MCF 10A (cell line): ENCODE measurements at regions of chr1 and their contacts with region 1.

Region 1: DNA sequence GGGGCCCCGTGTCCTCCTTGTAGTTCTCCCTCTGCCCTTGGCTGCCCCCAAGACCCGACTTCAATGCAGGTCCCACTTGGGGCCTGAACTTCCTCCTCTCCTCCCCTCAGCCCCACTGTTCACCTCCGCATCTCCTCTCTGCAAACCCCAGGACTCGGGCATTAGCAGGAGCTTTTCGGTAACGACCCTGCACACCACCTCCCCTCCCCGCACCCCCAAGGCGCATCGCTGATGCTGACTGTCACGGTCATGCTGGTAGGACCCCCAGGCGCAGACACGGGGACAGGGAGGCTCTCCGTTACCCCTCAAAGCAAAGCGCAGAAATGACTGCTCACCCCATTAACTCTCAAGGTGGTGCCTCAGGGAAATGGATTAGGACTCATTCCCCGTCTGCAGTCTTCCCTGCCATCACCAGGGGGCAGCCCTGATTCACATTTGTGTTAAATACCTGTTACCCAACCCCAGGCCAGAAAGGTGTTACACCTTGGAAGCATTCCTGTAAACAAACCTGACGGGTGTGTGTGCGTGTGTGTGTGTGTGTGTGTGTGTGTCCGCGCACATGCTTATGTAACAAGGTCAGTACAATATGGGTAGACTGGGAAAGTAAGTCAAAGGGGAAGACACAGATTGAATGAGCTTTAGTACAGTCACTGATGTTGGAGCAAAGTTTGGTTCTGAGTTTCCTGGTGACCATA is 6.4 kb upstream of the GUCA2B start:
- DNase-seq: peak; percentile 86
- H3K4me3 Mint-ChIP-seq: no peak overlapping the region
- H3K27ac Mint-ChIP-seq: no peak overlapping the region
- H3K4me1 Mint-ChIP-seq: no peaks in the 10 kb centered on the region
- H3K27me3 Mint-ChIP-seq: peaks cover 26% of the 10 kb centered on the region
- CTCF ChIP-seq: peak; percentile 81

Region 2: GRCh38 chr1:41980827-41981653 is 165.7 kb before region 1 on chr1:
- CTCF ChIA-PET with region 1: no interaction called
- POLR2A ChIA-PET with region 1: no interaction called
- intact Hi-C with region 1: no loop called
- DNase-seq: no peak
- H3K4me3 Mint-ChIP-seq: no peak overlapping the region
- H3K27ac Mint-ChIP-seq: no peak overlapping the region
- H3K4me1 Mint-ChIP-seq: no peaks in the 10 kb centered on the region
- H3K27me3 Mint-ChIP-seq: no peaks in the 10 kb centered on the region
- CTCF ChIP-seq: no peak

Region 3: GRCh38 chr1:42127748-42128147 is 19.0 kb before region 1 on chr1:
- CTCF ChIA-PET with region 1: no interaction called
- POLR2A ChIA-PET with region 1: no interaction called
- intact Hi-C with region 1: no loop called
- DNase-seq: no peak
- H3K4me3 Mint-ChIP-seq: no peak overlapping the region
- H3K27ac Mint-ChIP-seq: no peak overlapping the region
- H3K4me1 Mint-ChIP-seq: no peaks in the 10 kb centered on the region
- H3K27me3 Mint-ChIP-seq: peaks cover 46% of the 10 kb centered on the region
- CTCF ChIP-seq: no peak

Region 4: GRCh38 chr1:42165511-42166163 is 18.9 kb after region 1 on chr1:
- CTCF ChIA-PET with region 1: interaction called, 87 read pairs
- POLR2A ChIA-PET with region 1: interaction called, 8 read pairs
- intact Hi-C with region 1: no loop called
- DNase-seq: peak; percentile 89
- H3K4me3 Mint-ChIP-seq: no peak overlapping the region
- H3K27ac Mint-ChIP-seq: peak overlapping the region; percentile 54
- H3K4me1 Mint-ChIP-seq: peaks cover 17% of the 10 kb centered on the region
- H3K27me3 Mint-ChIP-seq: peaks cover 14% of the 10 kb centered on the region
- CTCF ChIP-seq: no peak

Region 5: GRCh38 chr1:42736150-42736850 is 589.5 kb after region 1 on chr1:
- CTCF ChIA-PET with region 1: no interaction called
- POLR2A ChIA-PET with region 1: no interaction called
- intact Hi-C with region 1: loop called (anchors 10 kb)
- DNase-seq: peak; percentile 49
- H3K4me3 Mint-ChIP-seq: no peak overlapping the region
- H3K27ac Mint-ChIP-seq: no peak overlapping the region
- H3K4me1 Mint-ChIP-seq: peaks cover 6% of the 10 kb centered on the region
- H3K27me3 Mint-ChIP-seq: no peaks in the 10 kb centered on the region
- CTCF ChIP-seq: peak; percentile 24